ENCODE measurements at regions of chr12 and their contacts with region 1.

Region 1: DNA sequence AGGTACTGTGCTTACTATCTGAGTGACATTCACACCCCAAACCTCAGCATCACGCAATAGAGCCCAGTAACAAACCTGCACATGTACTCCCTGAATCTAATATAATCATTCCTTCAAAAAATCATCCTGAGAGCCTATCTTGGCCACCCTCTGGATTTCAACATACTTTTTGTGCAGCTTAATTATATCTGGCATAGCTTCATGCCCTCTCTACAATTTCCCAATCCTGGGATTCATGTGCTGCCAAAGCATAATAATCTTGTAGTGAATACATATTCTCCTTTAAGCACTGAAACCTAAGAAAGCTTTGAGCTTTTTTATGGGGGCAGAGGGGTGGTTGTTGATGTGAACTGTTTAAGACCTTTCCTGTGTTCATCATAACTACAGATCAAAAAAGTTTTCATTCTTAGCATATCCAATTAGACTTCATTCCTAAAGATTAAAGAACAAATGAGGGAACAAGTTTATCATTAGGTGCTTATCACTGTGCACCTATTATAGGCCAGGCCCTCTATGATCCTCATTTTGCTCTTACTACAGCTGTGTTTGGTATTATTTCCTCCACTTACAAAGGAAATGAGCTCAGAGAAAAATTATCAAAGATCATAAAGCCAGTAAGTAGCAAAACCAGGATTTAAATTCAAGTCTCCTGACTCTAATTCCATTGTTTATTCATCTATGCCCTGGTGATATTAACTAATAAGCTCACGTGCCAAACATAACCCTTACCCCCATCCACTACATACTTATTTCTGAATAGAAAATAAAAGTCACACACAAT is 51.2 kb downstream of the SINHCAF start:
- DNase-seq: no peak
- H3K4me3 ChIP-seq: no peak overlapping the region
- H3K27ac ChIP-seq: no peak overlapping the region
- H3K4me1 ChIP-seq: no peaks in the 10 kb centered on the region
- H3K27me3 ChIP-seq: no peaks in the 10 kb centered on the region
- CTCF ChIP-seq: no peak

Region 2: GRCh38 chr12:30850684-30851083 is 424.0 kb before region 1 on chr12:
- intact Hi-C with region 1: loop called (anchors 5 kb)
- DNase-seq: no peak
- H3K4me3 ChIP-seq: no peak overlapping the region
- H3K27ac ChIP-seq: no peak overlapping the region
- H3K4me1 ChIP-seq: peaks cover 0 to 3% (median 0%) of the 10 kb centered on the region in 4 donors
- H3K27me3 ChIP-seq: peaks cover 0 to 11% of the 10 kb centered on the region in 2 donors
- CTCF ChIP-seq: no peak

Measured in tibial artery (tissue), 4 donors.